Activated T-helper 1 cell treated with anti-CD3 and anti-CD28 coated beads, Interleukin-12 subunit alpha, Interleukin-12 subunit beta, Interleukin-2, Interleukin-4 antibody, amounts not matched to agents 30 ng/mL and 10 ng/mL and 1 ng/mL, durations not matched to agents 14 hours and 24 hours and 36 hours (primary cell): ENCODE measurements at regions of chr9 and their contacts with region 1.

Region 1: GRCh38 chr9:128688512-128689292 is at the start of gene SET:
- DNase-seq: peak; percentile 93
- H3K4me3 Mint-ChIP-seq: peak within 1 kb of the TSS; percentile 87
- H3K27ac Mint-ChIP-seq: peak within 1 kb of the TSS; percentile 98
- H3K4me1 Mint-ChIP-seq: peaks cover 66% of the 10 kb centered on the region
- H3K27me3 Mint-ChIP-seq: no peaks in the 10 kb centered on the region
- total RNA-seq, gene SET: 775 and 795 TPM in 2 replicates

Region 2: DNA sequence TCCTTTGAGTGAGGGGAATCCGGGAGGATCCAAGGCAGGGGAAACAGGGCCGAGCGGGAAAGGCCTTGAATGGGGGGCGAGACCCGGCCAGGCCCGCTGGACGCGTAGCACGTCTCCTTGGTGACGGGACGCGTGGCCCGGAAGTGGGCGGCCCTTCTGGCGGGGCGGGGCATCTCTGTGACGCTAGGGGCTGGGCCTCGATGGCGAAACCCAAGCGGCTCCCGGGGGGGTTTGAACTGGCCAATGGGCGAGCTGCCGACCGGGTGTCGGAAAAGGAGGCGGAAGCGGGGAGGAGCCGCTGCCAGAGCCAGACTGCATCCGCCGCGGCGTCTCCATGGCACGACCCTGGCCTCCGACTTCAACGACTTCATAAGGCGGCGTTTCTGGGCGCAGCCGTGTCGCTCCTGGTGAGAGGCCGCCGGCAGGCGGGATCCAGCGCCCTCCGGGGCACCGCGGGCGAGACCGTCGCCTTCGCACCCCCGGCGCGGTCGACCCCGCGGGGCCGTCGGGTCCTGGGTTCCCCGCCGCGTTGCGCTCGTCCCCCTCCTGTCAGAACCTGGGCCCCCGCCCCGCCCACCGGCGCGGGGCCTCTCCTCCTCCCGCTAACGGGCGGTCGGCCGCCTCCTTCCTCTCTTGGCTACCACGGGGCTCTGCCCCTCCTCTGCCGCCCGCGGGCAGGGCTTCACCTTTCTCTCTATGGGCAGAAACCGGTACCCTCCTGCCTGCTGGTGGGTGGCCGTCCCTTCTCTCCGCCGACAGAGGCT is 232.7 kb before region 1 on chr9 and contains the start of gene ODF2:
- intact Hi-C with region 1: loop called (anchors 2 kb)
- DNase-seq: peak; percentile 98
- H3K4me3 Mint-ChIP-seq: peak within 1 kb of the TSS; percentile 93
- H3K27ac Mint-ChIP-seq: peak within 1 kb of the TSS; percentile 98
- H3K4me1 Mint-ChIP-seq: peaks cover 13% of the 10 kb centered on the region
- H3K27me3 Mint-ChIP-seq: peaks cover 3% of the 10 kb centered on the region
- total RNA-seq, gene ODF2: 55.6 and 57.6 TPM in 2 replicates

Region 3: DNA sequence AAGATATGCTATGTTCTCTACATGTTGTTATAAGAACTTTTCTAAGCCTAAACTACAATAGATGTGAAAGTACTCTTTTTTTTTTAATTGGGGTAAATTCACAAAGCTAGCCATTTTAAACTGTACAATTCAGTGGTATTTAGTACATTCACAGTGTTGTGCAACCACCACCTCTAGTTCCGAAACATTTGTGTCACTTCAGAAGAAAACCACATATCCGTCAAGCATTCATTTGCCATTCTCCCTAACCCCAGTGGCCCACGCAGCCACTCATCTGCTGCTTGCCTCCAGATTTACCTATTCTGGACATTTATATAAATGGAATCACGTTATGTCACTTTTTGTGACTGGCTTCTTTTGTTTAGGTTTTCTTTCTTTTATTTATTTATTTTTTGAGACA is 93.2 kb before region 1 on chr9:
- intact Hi-C with region 1: no loop called
- DNase-seq: no peak
- H3K4me3 Mint-ChIP-seq: no peak overlapping the region
- H3K27ac Mint-ChIP-seq: no peak overlapping the region
- H3K4me1 Mint-ChIP-seq: peaks cover 9% of the 10 kb centered on the region
- H3K27me3 Mint-ChIP-seq: no peaks in the 10 kb centered on the region

Region 4: GRCh38 chr9:128656416-128657343 is 32.0 kb before region 1 on chr9 and contains the start of gene DYNC2I2:
- intact Hi-C with region 1: loop called (anchors 1 kb)
- DNase-seq: peak; percentile 95
- H3K4me3 Mint-ChIP-seq: peak within 1 kb of the TSS; percentile 91
- H3K27ac Mint-ChIP-seq: peak within 1 kb of the TSS; percentile 100
- H3K4me1 Mint-ChIP-seq: peaks cover 15% of the 10 kb centered on the region
- H3K27me3 Mint-ChIP-seq: no peaks in the 10 kb centered on the region
- total RNA-seq, gene DYNC2I2: 41.5 and 43.9 TPM in 2 replicates

Region 5: GRCh38 chr9:128702445-128702948 is 13.8 kb after region 1 on chr9 and contains the start of gene PKN3:
- intact Hi-C with region 1: loop called (anchors 1 kb)
- DNase-seq: peak; percentile 82
- H3K4me3 Mint-ChIP-seq: peak within 1 kb of the TSS; percentile 86
- H3K27ac Mint-ChIP-seq: peak within 1 kb of the TSS; percentile 77
- H3K4me1 Mint-ChIP-seq: no peaks in the 10 kb centered on the region
- H3K27me3 Mint-ChIP-seq: peaks cover 2% of the 10 kb centered on the region
- total RNA-seq, gene PKN3: 17.7 and 19.3 TPM in 2 replicates

Region 6: DNA sequence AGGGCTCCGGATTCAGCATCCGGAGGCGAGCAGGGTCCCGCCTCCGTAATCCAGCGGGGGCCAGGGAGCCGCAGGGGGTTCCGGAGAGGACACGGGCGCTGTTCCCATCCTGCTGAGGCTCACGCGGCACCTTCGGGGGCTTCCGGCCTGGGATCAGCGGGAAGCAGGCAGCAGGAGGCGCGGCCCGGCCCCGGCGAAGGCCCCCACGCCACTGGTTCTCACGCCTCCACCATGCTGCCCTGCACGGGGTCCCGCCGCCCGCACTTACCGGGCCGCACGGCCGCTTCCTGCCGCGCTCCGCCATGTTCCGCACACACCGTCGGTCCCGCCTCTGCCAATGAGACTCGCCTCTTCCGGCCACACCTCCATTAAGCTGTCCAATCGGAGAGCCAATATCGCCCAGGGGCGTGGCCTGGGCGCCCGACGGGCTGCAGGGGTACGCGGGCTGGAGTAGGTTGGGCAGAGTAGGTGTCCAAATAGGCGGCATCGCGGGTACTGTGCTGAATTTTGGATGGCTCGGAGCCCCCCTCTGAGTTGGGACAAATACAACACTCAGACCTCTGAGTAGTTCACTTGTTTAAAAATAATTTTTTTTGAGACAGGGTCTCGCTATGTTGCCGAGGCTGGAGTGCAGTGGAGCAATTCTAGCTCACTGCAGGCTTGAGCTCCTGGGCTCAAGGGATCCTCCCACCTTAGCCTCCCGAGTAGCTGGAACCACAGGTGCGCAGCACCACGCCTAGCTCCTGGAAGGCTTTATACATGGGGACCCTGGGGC is 141.0 kb after region 1 on chr9 and contains the start of gene SPOUT1:
- intact Hi-C with region 1: loop called (anchors 1 kb)
- DNase-seq: peak; percentile 95
- H3K4me3 Mint-ChIP-seq: peak within 1 kb of the TSS; percentile 97
- H3K27ac Mint-ChIP-seq: peak within 1 kb of the TSS; percentile 88
- H3K4me1 Mint-ChIP-seq: peaks cover 23% of the 10 kb centered on the region
- H3K27me3 Mint-ChIP-seq: no peaks in the 10 kb centered on the region
- total RNA-seq, gene SPOUT1: 151 and 158 TPM in 2 replicates

Region 7: GRCh38 chr9:129028192-129028957 is 339.7 kb after region 1 on chr9 and contains the start of gene SH3GLB2:
- intact Hi-C with region 1: loop called (anchors 2 kb)
- DNase-seq: peak; percentile 85
- H3K4me3 Mint-ChIP-seq: peak within 1 kb of the TSS; percentile 91
- H3K27ac Mint-ChIP-seq: peak within 1 kb of the TSS; percentile 80
- H3K4me1 Mint-ChIP-seq: peaks cover 24% of the 10 kb centered on the region
- H3K27me3 Mint-ChIP-seq: no peaks in the 10 kb centered on the region
- total RNA-seq, gene SH3GLB2: 71.1 and 74.8 TPM in 2 replicates